Left lung (tissue), 14 donors: ENCODE measurements at regions of chr15 and their contacts with region 1.

Region 1: GRCh38 chr15:57146506-57147201 is 228.2 kb downstream of the TCF12 start:
- DNase-seq: peak in 2 of 4 donors; percentile 79 to 80
- ATAC-seq: peak; percentile 79
- H3K4me3 ChIP-seq: no peak overlapping the region
- H3K27ac ChIP-seq: peak overlapping the region; percentile 9 to 46
- H3K4me1 ChIP-seq: peaks cover 9 to 42% of the 10 kb centered on the region in 2 donors
- H3K27me3 ChIP-seq: no peaks in the 10 kb centered on the region
- CTCF ChIP-seq: peak; percentile 61 to 64

Region 2: DNA sequence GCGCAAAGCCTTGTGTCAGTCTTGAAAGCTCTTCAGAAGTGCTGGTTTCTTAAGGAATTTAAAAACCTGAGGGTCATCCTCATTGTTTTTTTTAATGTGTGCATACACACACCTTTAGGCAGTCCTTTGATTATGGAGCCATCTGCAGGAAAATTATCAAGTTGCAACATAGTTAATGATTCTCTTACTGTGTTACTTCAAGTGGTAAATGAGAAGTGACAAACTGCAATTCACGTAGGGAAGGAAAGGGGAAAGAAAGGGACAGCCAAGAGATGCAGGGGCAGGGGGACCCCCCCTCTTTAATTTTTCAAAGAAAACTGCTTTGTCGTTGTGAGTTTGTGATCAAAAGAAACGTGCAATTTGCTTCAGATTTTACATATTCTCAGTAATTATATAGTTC is 67.2 kb after region 1 on chr15:
- intact Hi-C with region 1: loop called in 1 of 2 experiments (anchors 10 kb)
- DNase-seq: peak in 1 of 4 donors; percentile 60
- ATAC-seq: peak; percentile 84
- H3K4me3 ChIP-seq: no peak overlapping the region
- H3K27ac ChIP-seq: no peak overlapping the region
- H3K4me1 ChIP-seq: peaks cover 0 to 44% of the 10 kb centered on the region in 2 donors
- H3K27me3 ChIP-seq: no peaks in the 10 kb centered on the region
- CTCF ChIP-seq: peak in 1 of 2 donors; percentile 39

Region 3: GRCh38 chr15:57298843-57299550 is 152.3 kb after region 1 on chr15:
- intact Hi-C with region 1: no loop called
- DNase-seq: no peak
- ATAC-seq: no peak
- H3K4me3 ChIP-seq: no peak overlapping the region
- H3K27ac ChIP-seq: no peak overlapping the region
- H3K4me1 ChIP-seq: peaks cover 0 to 14% of the 10 kb centered on the region in 2 donors
- H3K27me3 ChIP-seq: no peaks in the 10 kb centered on the region
- CTCF ChIP-seq: no peak